Caco-2 (cell line): ENCODE measurements at regions of chr5 and their contacts with region 1.

Region 1: DNA sequence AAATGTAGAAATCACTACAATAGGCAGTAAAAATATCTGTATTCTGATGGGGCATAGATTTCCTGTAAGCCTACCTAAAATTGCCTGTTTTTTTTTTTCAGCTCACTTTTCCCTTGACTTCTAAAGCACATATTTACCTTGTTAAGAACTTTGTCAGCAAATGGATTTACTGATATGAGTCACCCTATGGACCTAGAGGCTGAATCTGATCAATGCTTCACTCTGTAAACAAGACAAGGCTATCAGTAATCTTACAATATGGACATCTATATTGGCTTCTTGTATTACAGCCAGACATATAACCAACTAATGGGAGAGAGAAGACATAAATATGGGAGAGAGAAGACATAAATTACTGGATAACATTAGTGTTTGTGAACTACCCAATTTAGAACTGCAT is 792.7 kb upstream of the CHD1 start:
- DNase-seq: peak in 1 of 2 experiments; percentile 36
- H3K4me3 ChIP-seq: no peak overlapping the region
- H3K4me3 Mint-ChIP-seq: no peak overlapping the region
- H3K27ac Mint-ChIP-seq: no peak overlapping the region
- H3K4me1 ChIP-seq: peaks cover 11% of the 10 kb centered on the region
- H3K4me1 Mint-ChIP-seq: peaks cover 7% of the 10 kb centered on the region
- H3K27me3 ChIP-seq: no peaks in the 10 kb centered on the region
- H3K27me3 Mint-ChIP-seq: no peaks in the 10 kb centered on the region
- CTCF ChIP-seq: no peak

Region 2: DNA sequence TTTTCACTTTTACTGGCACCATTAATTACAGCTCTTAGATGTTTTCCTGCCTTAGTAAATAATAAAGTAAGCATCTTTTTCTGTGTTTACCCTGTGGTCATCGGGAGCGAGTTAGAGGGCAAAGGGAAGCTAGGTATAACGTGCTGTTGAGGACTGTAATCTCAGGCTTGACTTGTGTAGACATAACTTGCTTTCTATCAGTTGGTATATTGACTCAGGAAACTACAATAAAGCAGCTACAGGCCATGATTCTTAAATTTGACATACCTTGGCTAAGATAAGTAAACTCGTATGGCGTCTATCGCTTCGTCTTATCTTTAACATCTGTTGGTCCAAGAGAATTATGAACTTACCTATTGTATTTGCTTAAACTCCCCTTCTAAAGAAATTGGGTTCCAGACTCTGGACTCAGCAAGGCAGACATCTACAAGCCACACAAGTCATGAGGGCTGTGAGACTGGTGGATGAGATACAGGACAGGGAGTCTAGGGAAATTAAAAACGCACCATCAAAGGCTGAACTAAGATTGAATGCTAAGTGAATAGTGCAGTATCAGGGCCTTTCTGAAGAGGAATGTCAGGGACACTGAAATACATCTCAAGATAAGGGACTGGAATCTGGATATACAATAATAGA is 282.7 kb before region 1 on chr5:
- CTCF ChIA-PET with region 1: no interaction called
- POLR2A ChIA-PET with region 1: no interaction called
- intact Hi-C with region 1: loop called (anchors 5 kb)
- DNase-seq: peak; percentile 56 to 70
- H3K4me3 ChIP-seq: no peak overlapping the region
- H3K4me3 Mint-ChIP-seq: no peak overlapping the region
- H3K27ac Mint-ChIP-seq: no peak overlapping the region
- H3K4me1 ChIP-seq: peaks cover 21% of the 10 kb centered on the region
- H3K4me1 Mint-ChIP-seq: peaks cover 11% of the 10 kb centered on the region
- H3K27me3 ChIP-seq: no peaks in the 10 kb centered on the region
- H3K27me3 Mint-ChIP-seq: no peaks in the 10 kb centered on the region
- CTCF ChIP-seq: no peak

Region 3: DNA sequence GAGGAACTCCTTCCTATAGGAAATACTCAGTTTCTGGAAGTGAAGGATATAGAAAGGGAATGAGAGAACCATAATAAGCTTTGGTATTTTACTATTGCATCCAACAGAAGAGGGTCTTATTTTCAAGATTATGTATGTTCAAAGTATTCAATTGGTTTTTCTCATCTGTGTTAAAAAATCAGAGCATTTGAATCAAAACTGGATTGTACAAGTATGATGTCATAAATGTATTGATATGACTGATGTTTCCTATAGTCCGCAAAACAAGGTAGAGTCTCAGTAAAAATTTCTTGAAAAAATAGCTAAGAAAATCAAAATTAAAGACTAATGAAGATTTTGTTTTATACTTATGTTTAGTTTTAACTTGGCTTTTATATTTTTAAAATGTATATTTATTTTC is 492.0 kb after region 1 on chr5:
- CTCF ChIA-PET with region 1: no interaction called
- POLR2A ChIA-PET with region 1: no interaction called
- intact Hi-C with region 1: no loop called
- DNase-seq: no peak
- H3K4me3 ChIP-seq: no peak overlapping the region
- H3K4me3 Mint-ChIP-seq: no peak overlapping the region
- H3K27ac Mint-ChIP-seq: no peak overlapping the region
- H3K4me1 ChIP-seq: no peaks in the 10 kb centered on the region
- H3K4me1 Mint-ChIP-seq: no peaks in the 10 kb centered on the region
- H3K27me3 ChIP-seq: no peaks in the 10 kb centered on the region
- H3K27me3 Mint-ChIP-seq: no peaks in the 10 kb centered on the region
- CTCF ChIP-seq: no peak